ENCODE measurements at regions of chr9 and their contacts with region 1.

Region 1: DNA sequence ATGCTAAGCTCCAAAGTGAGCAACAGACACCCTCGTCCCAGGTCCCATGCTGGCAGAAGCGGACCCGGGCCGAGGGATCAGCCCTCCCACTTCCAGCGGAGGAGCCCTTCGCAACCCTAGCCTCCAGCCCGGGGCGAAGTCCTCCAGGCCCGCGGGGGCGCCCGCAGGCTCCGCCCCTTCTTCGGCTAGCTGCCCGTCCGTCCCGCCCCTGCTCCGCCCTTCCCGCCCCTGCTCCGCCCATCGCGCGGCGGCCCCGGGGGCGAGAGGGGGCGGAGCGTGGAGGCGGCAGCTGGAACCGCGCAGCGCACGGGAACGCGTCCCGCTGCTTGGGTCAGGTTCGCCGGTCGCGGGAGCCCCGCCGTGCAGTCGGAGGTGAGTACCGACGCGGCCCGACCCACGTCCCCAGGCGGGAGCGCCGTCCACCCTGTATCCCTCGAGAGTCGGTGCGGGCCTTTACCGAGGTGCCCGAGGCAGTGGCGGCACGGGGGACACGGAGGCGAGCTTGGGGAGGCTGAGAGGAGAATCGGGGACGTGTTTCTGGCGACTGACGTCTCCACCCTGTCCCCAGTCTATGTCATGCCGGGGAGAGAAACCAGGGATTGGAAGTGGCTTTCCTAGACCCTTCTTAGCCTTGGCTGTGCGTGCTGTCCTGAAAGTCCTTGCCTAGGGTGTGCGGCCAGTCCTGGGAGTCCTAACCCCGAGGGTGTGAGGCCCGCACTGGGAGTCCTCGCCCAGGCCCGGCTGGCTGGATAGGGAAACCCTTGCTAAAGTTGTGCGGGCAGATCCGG is at the start of gene ACO1:
- DNase-seq: peak; percentile 89
- ATAC-seq: peak; percentile 98
- H3K4me3 Mint-ChIP-seq: peak within 1 kb of the TSS; percentile 76
- H3K27ac Mint-ChIP-seq: no peak within 1 kb of the TSS
- H3K4me1 Mint-ChIP-seq: peaks cover 20% of the 10 kb centered on the region
- H3K27me3 Mint-ChIP-seq: peaks cover 34% of the 10 kb centered on the region
- total RNA-seq, gene ACO1: 7.0 to 9.9 TPM

Region 2: DNA sequence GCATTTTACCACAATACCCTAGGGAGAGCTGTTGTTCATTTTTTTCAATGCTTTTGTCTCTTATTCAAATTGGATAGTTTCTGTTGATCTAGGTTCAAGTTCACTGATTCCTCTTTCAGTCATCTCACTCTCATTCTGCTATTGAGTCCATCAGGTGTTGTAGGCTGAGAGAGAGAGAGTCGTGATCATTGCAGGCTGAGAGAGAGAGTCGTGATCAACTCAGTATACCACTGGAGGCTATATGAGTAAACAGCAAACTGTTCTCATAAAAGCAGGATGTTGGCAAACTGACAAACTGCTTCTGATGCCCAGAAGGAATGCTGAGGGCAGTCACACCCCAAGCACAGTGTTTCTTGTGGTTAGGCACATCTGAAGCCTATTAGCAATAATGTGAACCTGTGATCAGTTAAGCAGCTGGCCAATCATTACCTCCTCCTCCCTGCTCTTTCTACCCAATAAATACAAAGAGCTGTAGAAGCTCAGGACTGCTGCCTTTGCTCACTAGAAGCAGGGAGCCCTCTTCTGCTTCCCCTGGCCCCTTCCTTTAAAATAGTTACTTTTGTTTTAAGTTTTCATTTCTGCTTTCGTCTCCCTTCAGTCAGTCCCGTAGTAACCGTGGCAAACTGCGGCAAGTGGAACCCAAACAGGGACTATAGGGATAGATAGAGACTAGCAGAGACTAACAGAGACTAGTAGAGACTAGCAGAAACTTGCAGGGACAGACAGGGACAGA is 476.2 kb before region 1 on chr9:
- CTCF ChIA-PET with region 1: no interaction called
- DNase-seq: no peak
- ATAC-seq: no peak
- H3K4me3 Mint-ChIP-seq: peak overlapping the region; percentile 18
- H3K27ac Mint-ChIP-seq: no peak overlapping the region
- H3K4me1 Mint-ChIP-seq: no peaks in the 10 kb centered on the region
- H3K27me3 Mint-ChIP-seq: no peaks in the 10 kb centered on the region

Region 3: GRCh38 chr9:32351845-32352244 is 32.7 kb before region 1 on chr9:
- CTCF ChIA-PET with region 1: no interaction called
- DNase-seq: no peak
- ATAC-seq: no peak
- H3K4me3 Mint-ChIP-seq: no peak overlapping the region
- H3K27ac Mint-ChIP-seq: no peak overlapping the region
- H3K4me1 Mint-ChIP-seq: no peaks in the 10 kb centered on the region
- H3K27me3 Mint-ChIP-seq: no peaks in the 10 kb centered on the region

Region 4: DNA sequence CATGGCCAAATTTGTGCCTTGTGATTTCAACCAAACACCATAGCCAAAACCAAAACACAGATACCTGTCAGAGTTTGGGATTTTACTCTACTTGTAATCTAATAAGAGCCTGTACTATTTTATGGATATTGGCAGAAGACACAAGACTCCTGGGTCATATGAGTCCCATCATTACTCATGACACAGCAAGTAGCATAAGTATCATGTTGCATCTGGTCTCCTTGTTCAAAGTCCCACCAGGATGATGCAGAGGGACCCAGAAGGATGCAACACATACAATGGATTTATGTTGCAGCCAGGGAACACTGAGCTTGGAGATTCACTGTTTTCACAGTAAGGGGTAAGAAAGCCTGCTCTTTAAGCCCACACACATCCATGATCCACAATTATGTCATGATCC is 13.3 kb before region 1 on chr9:
- CTCF ChIA-PET with region 1: no interaction called
- DNase-seq: no peak
- ATAC-seq: no peak
- H3K4me3 Mint-ChIP-seq: no peak overlapping the region
- H3K27ac Mint-ChIP-seq: no peak overlapping the region
- H3K4me1 Mint-ChIP-seq: no peaks in the 10 kb centered on the region
- H3K27me3 Mint-ChIP-seq: no peaks in the 10 kb centered on the region

Region 5: GRCh38 chr9:32526041-32526706 is 141.6 kb after region 1 on chr9 and contains the start of gene RIGI:
- CTCF ChIA-PET with region 1: interaction called, 38 read pairs
- DNase-seq: peak; percentile 90
- ATAC-seq: peak; percentile 80
- H3K4me3 Mint-ChIP-seq: peak within 1 kb of the TSS; percentile 88
- H3K27ac Mint-ChIP-seq: peak within 1 kb of the TSS; percentile 96
- H3K4me1 Mint-ChIP-seq: peaks cover 55% of the 10 kb centered on the region
- H3K27me3 Mint-ChIP-seq: no peaks in the 10 kb centered on the region
- total RNA-seq, gene RIGI: 27.1 to 40.0 TPM

Region 6: GRCh38 chr9:32571969-32572899 is 187.7 kb after region 1 on chr9:
- CTCF ChIA-PET with region 1: interaction called, 454 read pairs
- DNase-seq: peak; percentile 89
- ATAC-seq: peak; percentile 85
- H3K4me3 Mint-ChIP-seq: peak overlapping the region; percentile 97
- H3K27ac Mint-ChIP-seq: peak overlapping the region; percentile 98
- H3K4me1 Mint-ChIP-seq: peaks cover 27% of the 10 kb centered on the region
- H3K27me3 Mint-ChIP-seq: no peaks in the 10 kb centered on the region

Region 7: GRCh38 chr9:32579706-32580331 is 195.3 kb after region 1 on chr9:
- CTCF ChIA-PET with region 1: interaction called, 454 read pairs
- DNase-seq: peak; percentile 84
- ATAC-seq: peak; percentile 81
- H3K4me3 Mint-ChIP-seq: no peak overlapping the region
- H3K27ac Mint-ChIP-seq: no peak overlapping the region
- H3K4me1 Mint-ChIP-seq: peaks cover 17% of the 10 kb centered on the region
- H3K27me3 Mint-ChIP-seq: peaks cover 18% of the 10 kb centered on the region

Measured in activated CD8-positive, alpha-beta memory T cell treated with anti-CD3 and anti-CD28 coated beads, Interleukin-2, amount 10 ng/mL, durations not matched to agents 7 days and 5 days (primary cell).